Esophagus muscularis mucosa (tissue), 4 donors: ENCODE measurements at regions of chr3 and their contacts with region 1.

Region 1: DNA sequence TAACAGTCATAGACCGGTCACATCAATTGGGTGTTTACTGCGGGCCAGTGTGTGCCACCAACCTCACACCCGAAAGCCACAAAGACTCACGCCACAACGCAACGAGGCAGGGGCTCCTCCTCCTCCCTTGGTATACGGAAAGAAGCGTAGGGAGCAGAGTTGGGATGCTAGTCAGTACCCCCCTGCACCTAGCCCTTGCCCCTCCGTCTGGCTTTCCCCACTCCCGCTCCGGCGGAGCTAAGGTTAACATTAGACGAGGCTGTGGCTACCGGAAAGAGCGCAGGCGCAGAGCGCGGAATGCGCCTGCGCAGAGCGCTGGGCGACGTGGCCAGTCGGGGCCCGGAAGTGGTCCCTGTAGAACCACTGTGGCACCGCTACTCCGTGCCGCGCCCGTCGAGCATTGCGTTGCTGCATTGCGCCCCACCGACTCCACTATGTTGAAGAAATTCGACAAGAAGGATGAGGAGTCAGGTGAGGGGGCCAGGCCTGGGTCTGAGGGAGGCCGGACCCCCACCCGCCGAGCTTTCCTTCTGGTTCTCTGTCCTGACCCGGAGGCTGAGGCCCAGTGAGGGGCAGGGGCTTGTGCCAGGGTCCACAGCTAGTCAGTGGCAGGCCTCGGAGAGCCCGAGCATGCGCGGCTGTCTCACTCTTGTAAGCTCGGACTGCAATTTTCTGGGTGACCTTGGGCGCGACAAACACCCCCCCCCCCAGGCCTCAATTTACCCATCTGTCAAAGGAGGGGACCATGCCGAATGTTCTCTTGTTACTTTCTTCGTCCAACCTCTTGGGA is at the start of gene COPG1:
- DNase-seq: peak; percentile 97
- H3K4me3 ChIP-seq: peak within 1 kb of the TSS; percentile 82 to 93 (median 88)
- H3K27ac ChIP-seq: peak within 1 kb of the TSS; percentile 82 to 86 (median 84)
- H3K4me1 ChIP-seq: peaks cover 24 to 65% (median 48%) of the 10 kb centered on the region in 4 donors
- H3K27me3 ChIP-seq: no peaks in the 10 kb centered on the region
- CTCF ChIP-seq: no peak
- EP300 ChIP-seq: no peak
- POLR2A ChIP-seq: peak; percentile 90
- total RNA-seq, gene COPG1: 55.6 to 89.1 (median 70.4) TPM

Region 2: DNA sequence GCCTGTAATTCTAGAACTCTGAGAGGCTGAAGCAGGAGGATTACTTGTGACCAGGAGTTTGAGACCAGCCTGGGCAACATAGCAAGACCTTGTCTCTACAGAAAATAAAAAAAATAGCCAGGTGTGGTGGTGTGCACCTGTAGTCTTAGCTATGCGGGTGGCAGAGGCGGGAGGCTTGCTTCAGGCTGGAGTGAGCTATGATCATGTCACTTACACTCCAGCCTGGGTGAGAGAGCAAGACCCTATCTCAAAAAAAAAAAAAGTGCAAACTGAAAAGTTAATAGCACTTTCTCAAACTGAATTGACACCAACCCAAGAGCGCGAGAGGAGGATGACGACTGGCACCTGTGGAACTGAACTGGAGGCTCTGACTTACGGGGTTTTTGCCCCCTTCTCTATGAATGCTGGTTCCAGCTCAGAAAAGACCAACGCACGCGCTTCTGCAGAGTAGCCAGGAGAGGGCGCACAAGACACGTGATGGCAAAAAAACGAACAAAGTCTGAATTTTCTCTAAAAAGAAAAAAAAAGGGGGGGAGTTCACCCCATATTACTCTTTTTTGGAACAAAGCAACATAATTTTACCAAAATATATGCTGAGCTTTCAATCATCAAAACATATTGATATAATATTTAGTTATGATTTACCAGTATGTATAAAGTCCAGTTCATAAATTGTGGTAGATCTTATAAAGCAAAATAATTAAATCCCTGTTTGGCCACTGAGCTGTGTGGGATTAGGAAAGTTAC is 279.3 kb before region 1 on chr3:
- intact Hi-C with region 1: loop called (anchors 2 kb)
- DNase-seq: no peak
- H3K4me3 ChIP-seq: no peak overlapping the region
- H3K27ac ChIP-seq: peak overlapping the region in 2 of 4 donors; percentile 66 to 69
- H3K4me1 ChIP-seq: peaks cover 0 to 35% (median 25%) of the 10 kb centered on the region in 4 donors
- H3K27me3 ChIP-seq: no peaks in the 10 kb centered on the region
- CTCF ChIP-seq: peak; percentile 91 to 94 (median 93)
- EP300 ChIP-seq: no peak
- POLR2A ChIP-seq: no peak

Region 3: GRCh38 chr3:129052675-129053074 is 196.8 kb before region 1 on chr3:
- intact Hi-C with region 1: loop called (anchors 5 kb)
- DNase-seq: no peak
- H3K4me3 ChIP-seq: no peak overlapping the region
- H3K27ac ChIP-seq: peak overlapping the region; percentile 60 to 76 (median 71)
- H3K4me1 ChIP-seq: peaks cover 20 to 27% (median 26%) of the 10 kb centered on the region in 4 donors
- H3K27me3 ChIP-seq: no peaks in the 10 kb centered on the region
- CTCF ChIP-seq: no peak
- EP300 ChIP-seq: no peak
- POLR2A ChIP-seq: no peak

Region 4: DNA sequence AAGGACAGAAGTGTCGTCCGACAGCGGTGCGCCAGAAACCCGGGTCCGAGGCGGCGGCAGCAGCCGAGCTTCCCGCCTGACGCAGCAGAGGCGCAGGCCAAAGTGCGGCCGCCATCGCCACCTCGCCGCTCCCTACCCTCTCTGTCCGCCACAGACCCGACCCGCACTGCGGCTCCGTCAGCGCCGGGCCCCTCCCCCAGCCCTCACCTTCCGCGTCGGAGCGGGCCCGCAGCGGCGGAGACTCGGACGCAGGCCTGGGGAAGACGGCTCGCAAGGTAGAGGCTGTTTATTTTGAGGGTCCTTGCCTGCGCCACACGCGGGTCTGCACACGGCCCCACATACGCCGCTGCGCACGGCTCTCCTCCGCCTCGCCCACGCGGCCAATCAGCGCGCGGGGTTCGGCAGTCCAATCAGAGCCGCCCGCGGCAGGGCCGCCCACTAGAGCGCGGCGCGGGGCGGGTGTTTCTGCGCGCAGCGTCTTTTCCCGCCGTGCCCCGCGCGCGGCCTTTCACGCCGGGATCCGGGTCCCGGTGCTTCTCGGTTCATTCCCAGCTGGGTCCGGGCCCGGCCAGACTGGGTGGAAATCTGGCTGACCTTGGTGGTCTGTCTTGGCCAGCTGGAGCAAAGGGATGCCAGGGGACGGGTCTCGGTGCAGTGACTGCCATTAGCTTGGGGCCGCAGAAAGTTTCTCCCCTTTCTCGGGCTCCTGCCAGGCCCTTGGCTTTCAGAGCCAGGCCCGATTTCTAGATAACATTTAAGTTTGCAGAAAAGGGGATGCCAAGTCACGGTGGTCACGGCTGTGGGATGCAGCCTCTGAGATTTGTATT is 65.7 kb before region 1 on chr3 and contains the start of gene CNBP:
- intact Hi-C with region 1: loop called (anchors 5 kb)
- DNase-seq: peak; percentile 97
- H3K4me3 ChIP-seq: peak within 1 kb of the TSS; percentile 89 to 99 (median 94)
- H3K27ac ChIP-seq: peak within 1 kb of the TSS; percentile 99 to 100 (median 100)
- H3K4me1 ChIP-seq: peaks cover 38 to 59% (median 54%) of the 10 kb centered on the region in 4 donors
- H3K27me3 ChIP-seq: no peaks in the 10 kb centered on the region
- CTCF ChIP-seq: no peak
- EP300 ChIP-seq: no peak
- POLR2A ChIP-seq: peak; percentile 98
- total RNA-seq, gene CNBP: 395 to 523 (median 469) TPM

Region 5: DNA sequence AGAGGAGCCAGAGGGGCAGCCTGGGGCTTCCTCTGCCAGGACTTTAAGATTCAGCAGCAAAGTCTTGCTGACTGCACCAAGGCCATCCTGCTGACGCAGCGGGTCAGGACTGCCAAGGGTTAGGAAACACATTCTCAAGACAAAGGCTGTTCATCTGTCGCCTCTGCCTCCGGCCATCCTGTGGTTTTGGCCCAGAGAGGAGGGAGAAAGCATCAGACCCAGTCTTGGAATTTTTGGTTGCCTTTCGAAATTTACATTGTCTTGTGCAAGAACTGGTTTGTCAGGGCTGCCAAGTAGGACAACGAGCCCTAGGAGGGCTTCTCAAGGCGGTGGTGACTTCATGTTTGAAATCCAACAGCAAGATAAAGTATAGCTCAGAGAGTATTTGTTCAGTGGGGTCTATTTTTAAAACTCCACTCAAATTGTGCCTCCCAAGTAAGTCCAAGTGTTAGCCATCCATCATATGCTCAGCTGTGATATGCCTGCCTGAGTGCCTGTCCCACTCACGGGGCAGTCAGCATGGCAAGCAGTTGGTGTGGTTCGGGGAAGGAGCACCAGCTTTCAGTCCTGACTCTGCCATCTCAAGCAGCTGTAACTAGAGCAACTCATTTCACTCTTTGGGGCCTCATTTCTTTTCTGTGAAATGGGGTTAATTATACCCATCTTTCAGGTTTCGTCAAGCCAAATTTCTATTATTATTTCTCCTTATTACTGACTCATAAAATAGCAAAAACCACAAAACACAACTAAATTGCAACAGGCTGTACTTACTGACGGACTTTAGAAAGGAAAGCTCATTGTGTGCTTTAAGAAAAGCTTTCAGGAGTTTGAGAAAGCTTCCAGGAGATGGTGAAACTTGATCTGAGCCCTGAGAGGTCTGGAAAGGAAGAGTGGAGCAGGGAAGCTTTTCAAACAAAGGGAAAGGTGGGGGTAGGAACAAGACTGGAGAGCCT is 236.5 kb after region 1 on chr3:
- intact Hi-C with region 1: no loop called
- DNase-seq: peak; percentile 93
- H3K4me3 ChIP-seq: no peak overlapping the region
- H3K27ac ChIP-seq: peak overlapping the region; percentile 33 to 60 (median 54)
- H3K4me1 ChIP-seq: peaks cover 26 to 42% (median 36%) of the 10 kb centered on the region in 4 donors
- H3K27me3 ChIP-seq: no peaks in the 10 kb centered on the region
- CTCF ChIP-seq: no peak
- EP300 ChIP-seq: no peak
- POLR2A ChIP-seq: no peak